Activated CD4-positive, alpha-beta T cell treated with anti-CD3 and anti-CD28 coated beads for 36 hours (primary cell): ENCODE measurements at regions of chr6 and their contacts with region 1.

Region 1: DNA sequence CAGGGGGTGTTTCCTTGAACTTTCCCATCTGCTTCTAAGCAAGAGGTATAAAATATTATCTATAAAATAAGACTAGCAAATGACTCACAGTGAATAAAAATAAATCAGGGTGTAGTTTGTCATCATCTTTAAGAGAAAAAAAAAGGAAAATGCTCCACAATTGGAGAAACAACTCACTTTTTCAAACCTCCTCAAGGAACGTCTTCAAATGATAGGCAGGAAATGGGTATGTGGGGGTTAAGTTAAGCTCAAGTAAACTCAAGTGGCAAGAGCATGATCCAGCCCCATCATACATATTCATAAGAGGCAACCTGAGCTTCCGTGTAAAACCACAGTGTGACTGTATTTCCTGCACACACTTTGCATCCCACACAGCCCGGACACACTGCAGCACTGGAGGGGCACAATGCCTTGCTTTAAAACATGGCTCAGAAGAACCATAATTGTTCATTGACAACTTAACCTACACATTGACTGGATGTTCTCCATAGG is 58.5 kb upstream of the CEP85L start:
- DNase-seq: peak; percentile 87
- ATAC-seq: peak; percentile 81
- H3K4me3 Mint-ChIP-seq: peak overlapping the region; percentile 85
- H3K27ac Mint-ChIP-seq: peak overlapping the region; percentile 91
- H3K4me1 Mint-ChIP-seq: peaks cover 76% of the 10 kb centered on the region
- H3K27me3 Mint-ChIP-seq: no peaks in the 10 kb centered on the region

Region 2: GRCh38 chr6:117615894-117616390 is 1094.0 kb before region 1 on chr6:
- CTCF ChIA-PET with region 1: no interaction called
- POLR2A ChIA-PET with region 1: no interaction called
- intact Hi-C with region 1: no loop called
- DNase-seq: no peak
- ATAC-seq: no peak
- H3K4me3 Mint-ChIP-seq: no peak overlapping the region
- H3K27ac Mint-ChIP-seq: peak overlapping the region; percentile 66
- H3K4me1 Mint-ChIP-seq: peaks cover 21% of the 10 kb centered on the region
- H3K27me3 Mint-ChIP-seq: peaks cover 5% of the 10 kb centered on the region

Region 3: DNA sequence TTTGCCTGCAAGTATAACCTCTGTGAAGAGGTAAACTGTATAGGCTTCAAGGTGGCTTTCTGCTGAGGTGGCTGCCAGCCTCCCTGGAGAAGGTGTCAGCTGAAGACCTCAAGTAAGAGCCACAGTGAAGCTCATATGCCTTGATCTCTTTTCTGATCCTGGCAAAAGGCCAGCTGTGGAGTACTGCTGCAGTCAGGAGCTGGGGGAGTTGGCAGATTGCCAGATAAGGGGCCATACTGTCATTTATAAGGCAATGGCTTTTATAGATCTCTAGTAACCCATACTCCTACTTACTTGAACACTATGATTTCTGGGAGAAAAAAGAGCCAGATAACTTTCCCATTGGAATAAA is 49.7 kb before region 1 on chr6:
- CTCF ChIA-PET with region 1: interaction called, 11 read pairs
- POLR2A ChIA-PET with region 1: interaction called, 10 read pairs
- intact Hi-C with region 1: loop called (anchors 1 kb)
- DNase-seq: peak; percentile 72
- ATAC-seq: peak; percentile 30
- H3K4me3 Mint-ChIP-seq: peak overlapping the region; percentile 42
- H3K27ac Mint-ChIP-seq: peak overlapping the region; percentile 90
- H3K4me1 Mint-ChIP-seq: peaks cover 75% of the 10 kb centered on the region
- H3K27me3 Mint-ChIP-seq: no peaks in the 10 kb centered on the region

Region 4: GRCh38 chr6:118685823-118686449 is 24.0 kb before region 1 on chr6:
- CTCF ChIA-PET with region 1: interaction called, 7 read pairs
- POLR2A ChIA-PET with region 1: interaction called, 5 read pairs
- intact Hi-C with region 1: loop called (anchors 2 kb)
- DNase-seq: no peak
- ATAC-seq: no peak
- H3K4me3 Mint-ChIP-seq: no peak overlapping the region
- H3K27ac Mint-ChIP-seq: peak overlapping the region; percentile 40
- H3K4me1 Mint-ChIP-seq: peaks cover 70% of the 10 kb centered on the region
- H3K27me3 Mint-ChIP-seq: no peaks in the 10 kb centered on the region

Region 5: GRCh38 chr6:118768904-118769325 is 59.0 kb after region 1 on chr6:
- CTCF ChIA-PET with region 1: interaction called, 7 read pairs
- POLR2A ChIA-PET with region 1: interaction called, 3 read pairs
- intact Hi-C with region 1: loop called in 1 of 2 experiments (anchors 2 kb)
- DNase-seq: peak; percentile 54
- ATAC-seq: peak; percentile 77
- H3K4me3 Mint-ChIP-seq: peak overlapping the region; percentile 27
- H3K27ac Mint-ChIP-seq: peak overlapping the region; percentile 89
- H3K4me1 Mint-ChIP-seq: peaks cover 26% of the 10 kb centered on the region
- H3K27me3 Mint-ChIP-seq: no peaks in the 10 kb centered on the region

Region 6: DNA sequence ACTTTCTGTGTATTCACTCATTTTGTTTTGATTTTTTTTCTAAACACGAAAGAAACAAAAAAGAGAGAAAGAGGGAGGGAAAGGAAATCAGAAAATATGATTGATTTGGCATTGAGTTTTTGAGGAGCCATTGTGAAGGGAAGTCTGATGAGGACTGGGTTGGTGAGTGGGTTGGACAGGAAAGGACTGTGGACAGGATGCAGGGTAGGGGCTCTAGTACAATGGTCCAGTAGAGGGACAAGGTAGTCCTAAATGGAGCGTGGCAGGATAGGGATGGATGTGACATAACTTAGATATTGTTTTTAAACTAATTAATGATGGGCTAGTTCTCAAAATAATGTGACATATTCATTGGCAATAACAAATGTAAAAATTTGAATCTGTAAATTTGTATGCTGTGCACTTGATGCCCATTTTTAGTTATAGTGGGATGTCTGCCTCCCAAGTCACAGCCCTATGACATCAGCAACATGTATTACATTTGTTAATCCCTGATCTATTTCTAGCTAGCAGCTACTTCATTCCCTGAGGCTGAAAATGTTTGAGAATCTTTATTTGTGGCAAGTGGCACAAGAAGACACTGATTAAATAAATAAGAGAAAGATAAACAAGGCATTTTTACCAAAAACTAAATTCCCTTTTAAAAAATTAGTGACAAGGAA is 120.0 kb after region 1 on chr6:
- CTCF ChIA-PET with region 1: no interaction called
- POLR2A ChIA-PET with region 1: no interaction called
- intact Hi-C with region 1: no loop called
- DNase-seq: no peak
- ATAC-seq: no peak
- H3K4me3 Mint-ChIP-seq: no peak overlapping the region
- H3K27ac Mint-ChIP-seq: no peak overlapping the region
- H3K4me1 Mint-ChIP-seq: no peaks in the 10 kb centered on the region
- H3K27me3 Mint-ChIP-seq: no peaks in the 10 kb centered on the region

Region 7: DNA sequence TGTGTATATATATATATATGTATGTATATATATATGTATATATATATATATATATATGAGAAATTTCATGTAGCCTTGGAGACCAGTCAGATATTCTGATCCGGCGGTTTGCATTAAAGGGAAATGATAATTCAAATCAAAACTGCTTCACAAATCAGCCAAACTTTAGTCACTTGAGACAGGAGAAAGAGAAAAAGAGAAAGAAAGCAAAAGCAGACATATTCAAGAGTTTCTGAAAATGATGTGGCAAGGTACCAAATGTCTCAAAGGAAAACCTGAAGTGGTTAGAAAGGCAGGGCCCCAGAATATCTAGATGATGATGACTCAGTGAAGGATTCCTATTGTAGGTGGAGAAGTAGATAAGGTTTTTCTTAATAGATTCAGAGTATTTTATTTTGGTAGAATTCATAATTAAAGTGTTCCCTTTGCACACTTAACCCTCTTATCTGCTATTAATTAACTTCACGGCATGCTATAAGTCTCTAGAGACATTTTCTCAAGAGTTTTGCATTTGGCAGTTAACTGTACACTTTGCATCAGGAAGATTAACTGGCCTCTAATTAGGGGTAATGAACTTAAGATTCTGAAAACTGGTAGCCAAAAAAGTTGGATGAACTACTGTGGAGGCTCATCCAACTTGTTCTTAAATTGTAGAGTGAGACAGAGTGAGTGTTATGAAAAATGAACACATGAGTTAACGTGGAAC is 133.9 kb after region 1 on chr6:
- CTCF ChIA-PET with region 1: no interaction called
- POLR2A ChIA-PET with region 1: interaction called, 3 read pairs
- intact Hi-C with region 1: loop called (anchors 1 kb)
- DNase-seq: peak; percentile 49
- ATAC-seq: peak; percentile 87
- H3K4me3 Mint-ChIP-seq: no peak overlapping the region
- H3K27ac Mint-ChIP-seq: peak overlapping the region; percentile 48
- H3K4me1 Mint-ChIP-seq: peaks cover 26% of the 10 kb centered on the region
- H3K27me3 Mint-ChIP-seq: no peaks in the 10 kb centered on the region

Region 8: DNA sequence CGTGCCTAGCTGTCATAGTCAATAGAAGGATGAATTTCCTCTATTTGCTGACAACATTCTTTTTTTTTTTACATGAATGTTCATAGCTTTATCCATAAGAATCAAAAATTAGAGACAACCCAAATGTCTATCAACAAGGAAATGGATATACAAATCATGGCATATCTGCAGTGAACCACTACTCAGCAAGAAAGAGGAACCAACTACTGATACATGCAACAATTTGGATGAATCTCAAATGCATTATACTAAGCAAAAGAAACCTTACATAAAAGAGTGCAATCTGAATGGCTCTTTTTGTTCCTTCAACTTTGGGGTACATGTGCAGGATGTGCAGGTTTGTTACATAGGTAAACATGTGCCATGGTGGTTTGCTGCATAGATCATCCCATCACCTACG is 242.8 kb after region 1 on chr6:
- CTCF ChIA-PET with region 1: no interaction called
- POLR2A ChIA-PET with region 1: no interaction called
- intact Hi-C with region 1: no loop called
- DNase-seq: no peak
- ATAC-seq: no peak
- H3K4me3 Mint-ChIP-seq: no peak overlapping the region
- H3K27ac Mint-ChIP-seq: no peak overlapping the region
- H3K4me1 Mint-ChIP-seq: no peaks in the 10 kb centered on the region
- H3K27me3 Mint-ChIP-seq: no peaks in the 10 kb centered on the region

Region 9: GRCh38 chr6:119078376-119079282 is 368.7 kb after region 1 on chr6 and contains the start of gene FAM184A:
- CTCF ChIA-PET with region 1: no interaction called
- POLR2A ChIA-PET with region 1: no interaction called
- intact Hi-C with region 1: loop called in 1 of 2 experiments (anchors 5 kb)
- DNase-seq: peak; percentile 82
- ATAC-seq: peak; percentile 37
- H3K4me3 Mint-ChIP-seq: peak within 1 kb of the TSS; percentile 77
- H3K27ac Mint-ChIP-seq: peak within 1 kb of the TSS; percentile 94
- H3K4me1 Mint-ChIP-seq: peaks cover 46% of the 10 kb centered on the region
- H3K27me3 Mint-ChIP-seq: no peaks in the 10 kb centered on the region
- total RNA-seq, gene FAM184A: 13.8 to 14.5 TPM